ENCODE measurements at regions of chr11 and their contacts with region 1.

Region 1: DNA sequence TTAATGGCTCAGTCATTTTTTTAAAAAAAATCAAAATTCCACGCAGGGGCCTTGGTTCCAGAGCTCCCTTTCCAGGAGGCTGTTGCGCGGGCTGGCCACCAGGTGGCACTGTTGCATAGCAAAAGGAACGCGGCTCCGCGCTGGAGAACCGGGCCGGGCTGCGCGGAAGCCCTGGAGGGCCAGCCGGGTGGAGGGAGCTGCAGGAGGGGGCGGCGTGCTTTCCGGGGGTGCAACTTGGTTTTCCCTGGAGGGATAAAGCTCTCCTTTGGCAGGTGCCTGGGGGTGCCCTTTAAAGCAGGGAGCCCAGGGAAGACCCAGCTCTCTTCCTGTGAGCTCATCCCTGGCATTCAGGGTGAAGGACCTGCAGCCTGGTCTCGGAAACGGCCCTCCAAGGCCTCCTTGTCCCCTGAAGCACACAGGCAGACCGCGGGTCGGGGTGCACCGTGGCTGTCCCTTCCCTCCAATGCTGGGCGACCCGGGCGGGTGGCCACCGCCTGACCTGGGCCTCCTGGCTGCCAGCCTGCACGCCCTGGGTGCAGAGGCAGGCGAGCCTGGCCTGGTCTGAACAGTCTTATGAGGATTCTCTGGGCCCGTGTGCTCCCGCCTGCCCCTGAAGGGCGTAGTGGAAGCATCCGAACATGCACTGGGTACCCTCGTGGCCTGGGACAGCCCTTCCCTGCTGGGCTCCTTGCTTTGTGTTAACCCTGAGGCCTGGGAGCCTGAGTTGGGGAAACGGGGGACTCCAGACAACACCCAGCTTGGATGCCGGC is 23.4 kb downstream of the KRTAP5-5 start:
- DNase-seq: peak; percentile 93
- H3K4me3 Mint-ChIP-seq: no peak overlapping the region
- H3K27ac Mint-ChIP-seq: no peak overlapping the region
- H3K4me1 Mint-ChIP-seq: no peaks in the 10 kb centered on the region
- H3K27me3 Mint-ChIP-seq: peaks cover 10% of the 10 kb centered on the region

Region 2: DNA sequence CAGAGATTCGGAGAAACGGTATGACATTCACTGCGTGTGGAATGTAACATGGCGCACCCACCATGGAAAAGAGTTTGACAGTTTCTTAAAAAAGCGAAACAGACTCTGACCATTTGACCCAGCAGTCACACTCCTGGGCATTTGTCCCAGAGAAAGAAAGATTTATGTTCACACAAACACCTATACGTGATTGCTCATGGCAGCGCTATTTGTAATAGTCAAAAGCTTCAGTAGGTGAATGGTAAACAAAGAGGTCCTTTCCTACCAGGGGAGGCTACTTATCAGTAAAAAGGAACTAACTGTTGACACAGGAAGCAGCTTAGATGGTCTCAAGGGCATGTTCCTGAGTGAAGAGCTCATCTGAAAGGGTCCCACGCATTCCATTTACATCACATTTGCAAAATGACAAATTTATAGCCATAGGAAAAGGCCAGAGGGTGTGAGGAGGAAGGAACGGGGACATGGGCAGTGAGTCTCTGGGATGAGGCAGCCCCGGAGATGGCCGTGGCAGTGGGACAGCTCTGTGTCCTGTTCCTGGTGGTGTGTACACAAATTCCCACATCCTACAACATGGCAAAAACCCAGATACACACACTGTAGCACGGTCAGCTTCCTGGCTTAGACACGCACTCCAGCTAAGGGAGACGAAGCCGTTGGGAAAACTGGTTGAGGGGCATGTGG is 29.4 kb after region 1 on chr11:
- intact Hi-C with region 1: no loop called
- DNase-seq: no peak
- H3K4me3 Mint-ChIP-seq: no peak overlapping the region
- H3K27ac Mint-ChIP-seq: no peak overlapping the region
- H3K4me1 Mint-ChIP-seq: no peaks in the 10 kb centered on the region
- H3K27me3 Mint-ChIP-seq: peaks cover 5% of the 10 kb centered on the region

Region 3: GRCh38 chr11:1694064-1694845 is 41.3 kb after region 1 on chr11:
- intact Hi-C with region 1: loop called (anchors 5 kb)
- DNase-seq: peak; percentile 95
- H3K4me3 Mint-ChIP-seq: no peak overlapping the region
- H3K27ac Mint-ChIP-seq: no peak overlapping the region
- H3K4me1 Mint-ChIP-seq: peaks cover 5% of the 10 kb centered on the region
- H3K27me3 Mint-ChIP-seq: peaks cover 15% of the 10 kb centered on the region

Region 4: DNA sequence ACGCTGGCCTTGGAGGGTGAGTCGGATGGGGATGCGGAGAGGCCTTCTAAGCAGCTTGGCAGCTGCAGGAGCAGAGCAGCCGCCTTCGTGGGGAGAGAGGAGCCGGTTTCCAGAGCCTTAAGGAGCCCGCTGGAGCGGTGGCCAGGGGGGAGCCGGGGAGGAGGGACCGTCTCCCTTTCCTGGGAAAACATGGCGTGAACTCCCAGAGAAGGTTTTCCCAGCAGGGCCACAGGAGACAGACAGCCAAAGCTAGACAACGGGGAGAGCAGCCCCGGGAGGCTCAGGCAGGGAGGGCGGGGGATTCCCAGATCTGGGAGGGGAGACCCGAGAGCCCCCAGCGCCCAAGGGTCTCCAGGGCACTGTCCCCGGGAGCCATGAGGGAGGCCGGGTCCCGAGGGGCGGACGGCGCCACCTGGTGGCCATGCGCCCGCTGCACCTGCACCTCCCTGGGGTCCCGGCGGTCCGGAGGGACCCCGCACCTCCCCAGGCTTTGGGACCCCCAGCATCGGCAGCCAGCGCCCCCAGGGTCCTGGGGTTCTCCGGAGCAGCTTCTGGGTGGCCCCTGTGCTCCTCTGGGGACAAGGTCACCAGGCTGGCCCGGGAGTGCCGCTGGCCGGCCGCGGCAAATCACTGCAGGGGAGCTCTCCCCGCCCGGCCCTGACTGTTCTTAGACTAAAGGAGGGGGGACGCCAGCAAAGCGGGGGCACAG is 179.4 kb after region 1 on chr11:
- intact Hi-C with region 1: loop called (anchors 1 kb)
- DNase-seq: peak; percentile 91
- H3K4me3 Mint-ChIP-seq: no peak overlapping the region
- H3K27ac Mint-ChIP-seq: no peak overlapping the region
- H3K4me1 Mint-ChIP-seq: no peaks in the 10 kb centered on the region
- H3K27me3 Mint-ChIP-seq: peaks cover 3% of the 10 kb centered on the region

Region 5: GRCh38 chr11:2151500-2152257 is 498.7 kb after region 1 on chr11:
- intact Hi-C with region 1: loop called (anchors 1 kb)
- DNase-seq: peak; percentile 92
- H3K4me3 Mint-ChIP-seq: no peak overlapping the region
- H3K27ac Mint-ChIP-seq: no peak overlapping the region
- H3K4me1 Mint-ChIP-seq: peaks cover 3% of the 10 kb centered on the region
- H3K27me3 Mint-ChIP-seq: peaks cover 32% of the 10 kb centered on the region

Measured in activated CD4-positive, alpha-beta T cell treated with anti-CD3 and anti-CD28 coated beads, Interleukin-2, amount 10 ng/mL, durations not matched to agents 24 days and 14 days (primary cell).